ENCODE measurements at regions of chr4 and their contacts with region 1.

Region 1: GRCh38 chr4:172245516-172245915 is 432.3 kb downstream of the GALNTL6 start:
- DNase-seq: no peak
- H3K4me3 Mint-ChIP-seq: no peak overlapping the region
- H3K27ac Mint-ChIP-seq: no peak overlapping the region
- H3K4me1 Mint-ChIP-seq: no peaks in the 10 kb centered on the region
- H3K27me3 Mint-ChIP-seq: peaks cover 73% of the 10 kb centered on the region
- CTCF ChIP-seq: no peak

Region 2: GRCh38 chr4:172830295-172830764 is 584.8 kb after region 1 on chr4:
- CTCF ChIA-PET with region 1: no interaction called
- POLR2A ChIA-PET with region 1: no interaction called
- intact Hi-C with region 1: loop called (anchors 2 kb)
- DNase-seq: peak; percentile 23
- H3K4me3 Mint-ChIP-seq: no peak overlapping the region
- H3K27ac Mint-ChIP-seq: no peak overlapping the region
- H3K4me1 Mint-ChIP-seq: no peaks in the 10 kb centered on the region
- H3K27me3 Mint-ChIP-seq: peaks cover 58% of the 10 kb centered on the region
- CTCF ChIP-seq: peak; percentile 28

Measured in MCF 10A (cell line).